ENCODE measurements at regions of chr20 and their contacts with region 1.

Region 1: GRCh38 chr20:53623454-53624211 is 30.0 kb upstream of the ZNF217 start:
- DNase-seq: peak; percentile 81
- H3K4me3 Mint-ChIP-seq: peak overlapping the region; percentile 81
- H3K27ac Mint-ChIP-seq: peak overlapping the region; percentile 98
- H3K4me1 Mint-ChIP-seq: peaks cover 36% of the 10 kb centered on the region
- H3K27me3 Mint-ChIP-seq: no peaks in the 10 kb centered on the region

Region 2: DNA sequence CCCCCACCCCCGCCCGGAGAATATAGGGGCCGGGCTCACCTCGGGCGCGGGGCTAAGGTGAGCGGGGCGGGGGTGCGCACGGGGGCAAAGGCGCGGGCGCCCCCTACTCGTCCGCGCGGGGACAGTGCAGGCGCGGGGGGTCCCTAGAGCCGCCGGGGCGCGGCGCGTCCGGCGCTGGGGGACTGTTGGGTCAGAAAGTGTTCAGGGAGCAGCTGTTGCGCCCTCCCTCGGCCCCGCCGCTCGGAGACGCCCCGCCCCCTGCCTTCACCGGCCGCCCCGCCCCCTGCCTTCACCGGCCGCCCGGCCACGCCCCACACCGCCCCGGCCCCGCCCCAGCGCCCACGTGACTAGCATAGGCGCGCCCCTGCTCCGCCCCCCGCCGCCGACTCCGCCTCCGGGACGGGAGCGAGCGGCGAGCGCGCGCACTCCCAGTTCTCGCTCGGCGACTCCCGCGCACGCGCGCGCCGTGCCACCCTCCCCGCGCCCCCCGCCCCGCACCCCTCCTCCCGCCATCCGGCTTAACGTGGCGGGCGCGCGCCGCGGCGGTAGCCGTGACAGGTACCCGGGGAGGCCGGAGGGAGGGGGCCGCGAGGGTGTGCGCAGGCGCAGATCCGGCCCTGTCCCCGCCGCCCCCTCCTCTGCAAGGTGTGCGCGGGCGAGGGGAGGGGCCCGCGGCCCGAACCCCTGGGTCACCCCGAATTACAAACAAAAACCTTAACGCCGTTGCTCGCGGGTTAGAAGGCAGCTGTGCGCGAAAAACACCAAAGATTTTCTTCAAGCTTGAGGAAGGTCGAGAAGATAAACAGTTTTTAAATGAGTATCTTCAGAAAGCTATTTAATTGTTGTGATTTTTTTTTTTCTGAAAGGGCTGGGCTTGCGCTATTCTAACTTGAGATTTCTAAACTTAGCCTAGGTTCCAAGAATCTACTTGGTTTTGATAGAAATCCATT is 29.3 kb before region 1 on chr20:
- intact Hi-C with region 1: loop called (anchors 2 kb)
- DNase-seq: peak; percentile 99
- H3K4me3 Mint-ChIP-seq: peak overlapping the region; percentile 86
- H3K27ac Mint-ChIP-seq: peak overlapping the region; percentile 93
- H3K4me1 Mint-ChIP-seq: peaks cover 45% of the 10 kb centered on the region
- H3K27me3 Mint-ChIP-seq: no peaks in the 10 kb centered on the region

Region 3: GRCh38 chr20:53652090-53652858 is 28.6 kb after region 1 on chr20:
- intact Hi-C with region 1: loop called (anchors 2 kb)
- DNase-seq: peak; percentile 76
- H3K4me3 Mint-ChIP-seq: peak overlapping the region; percentile 87
- H3K27ac Mint-ChIP-seq: peak overlapping the region; percentile 99
- H3K4me1 Mint-ChIP-seq: peaks cover 40% of the 10 kb centered on the region
- H3K27me3 Mint-ChIP-seq: no peaks in the 10 kb centered on the region

Region 4: GRCh38 chr20:53899351-53900167 is 275.9 kb after region 1 on chr20:
- intact Hi-C with region 1: no loop called
- DNase-seq: peak; percentile 92
- H3K4me3 Mint-ChIP-seq: peak overlapping the region; percentile 53
- H3K27ac Mint-ChIP-seq: peak overlapping the region; percentile 95
- H3K4me1 Mint-ChIP-seq: peaks cover 53% of the 10 kb centered on the region
- H3K27me3 Mint-ChIP-seq: no peaks in the 10 kb centered on the region

Measured in activated CD4-positive, alpha-beta T cell treated with anti-CD3 and anti-CD28 coated beads, Interleukin-2, amount 10 ng/mL, durations not matched to agents 24 days and 14 days (primary cell).